ENCODE measurements at regions of chr6 and their contacts with region 1.

Region 1: GRCh38 chr6:36599791-36600209 is 5.6 kb downstream of the SRSF3 start:
- DNase-seq: peak; percentile 67
- ATAC-seq: peak; percentile 31

Region 2: DNA sequence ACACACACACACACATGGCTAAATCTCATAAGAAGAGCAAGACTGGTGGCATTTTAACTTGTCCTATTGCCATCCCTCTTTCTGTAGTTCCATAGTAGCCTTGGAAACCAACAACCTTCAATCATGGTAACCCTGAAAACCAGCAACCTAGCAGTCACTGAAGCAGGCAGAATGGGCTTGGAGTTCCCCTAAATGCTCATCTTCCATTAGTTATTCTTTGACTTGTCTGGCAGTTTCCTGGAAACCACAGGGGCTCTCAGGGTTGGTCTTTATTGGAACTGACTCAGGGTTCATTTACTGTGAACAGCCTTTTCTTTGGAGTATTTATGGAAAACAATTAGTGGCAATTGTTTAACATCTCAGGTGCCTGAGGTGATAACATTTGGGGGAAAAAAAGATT is 422.6 kb before region 1 on chr6:
- intact Hi-C with region 1: no loop called
- DNase-seq: no peak
- ATAC-seq: no peak

Region 3: DNA sequence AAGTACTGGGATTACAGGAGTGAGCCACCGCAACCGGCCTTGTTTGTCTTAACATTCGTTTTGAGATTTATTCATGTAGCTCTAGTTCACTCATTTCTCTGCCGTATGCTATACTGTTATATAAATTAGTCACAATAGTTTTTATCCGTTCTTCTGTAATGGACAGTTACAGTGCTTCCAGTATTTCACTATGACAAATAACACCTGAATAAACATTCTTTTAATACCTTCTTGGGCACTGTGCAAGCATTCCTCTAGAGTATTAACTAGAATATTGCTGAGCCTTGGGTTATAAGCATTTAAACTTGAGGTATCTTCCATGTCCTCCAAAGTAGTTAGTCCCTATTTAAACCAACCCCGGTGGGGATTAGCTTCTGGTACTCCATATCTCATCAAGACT is 98.1 kb before region 1 on chr6:
- intact Hi-C with region 1: no loop called
- DNase-seq: no peak
- ATAC-seq: no peak

Region 4: GRCh38 chr6:36851149-36851614 is 251.4 kb after region 1 on chr6:
- intact Hi-C with region 1: loop called (anchors 10 kb)
- DNase-seq: no peak
- ATAC-seq: peak; percentile 28

Measured in Right ventricle myocardium superior (tissue), 1 donor.